Calu3 (cell line): ENCODE measurements at regions of chr5 and their contacts with region 1.

Region 1: GRCh38 chr5:103232393-103232999 is 26.1 kb upstream of the MACIR start:
- DNase-seq: peak; percentile 30
- H3K4me3 Mint-ChIP-seq: no peak overlapping the region
- H3K27ac Mint-ChIP-seq: no peak overlapping the region
- H3K4me1 Mint-ChIP-seq: no peaks in the 10 kb centered on the region
- H3K27me3 Mint-ChIP-seq: no peaks in the 10 kb centered on the region
- CTCF ChIP-seq: peak; percentile 71

Region 2: DNA sequence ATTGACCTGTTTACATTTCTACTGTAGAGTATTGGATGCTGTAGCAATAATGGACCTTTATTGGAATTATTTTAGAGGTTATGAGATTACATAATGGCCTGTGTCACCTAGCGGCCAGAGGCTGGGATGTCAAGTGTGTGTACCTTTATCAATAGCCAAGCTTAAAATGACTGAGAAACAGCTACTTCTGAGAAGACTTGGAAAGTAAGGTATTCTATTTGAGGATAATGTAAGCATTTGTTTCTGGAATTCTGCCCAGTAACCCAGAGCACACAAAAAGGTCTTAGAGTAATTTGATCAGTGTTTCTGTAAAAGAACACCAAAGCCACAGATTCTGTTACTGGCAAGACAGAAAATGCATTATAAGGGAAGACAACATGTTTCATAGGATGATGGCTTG is 142.9 kb after region 1 on chr5:
- CTCF ChIA-PET with region 1: no interaction called
- intact Hi-C with region 1: loop called (anchors 5 kb)
- DNase-seq: peak; percentile 26
- H3K4me3 Mint-ChIP-seq: no peak overlapping the region
- H3K27ac Mint-ChIP-seq: no peak overlapping the region
- H3K4me1 Mint-ChIP-seq: peaks cover 14% of the 10 kb centered on the region
- H3K27me3 Mint-ChIP-seq: peaks cover 10% of the 10 kb centered on the region
- CTCF ChIP-seq: peak; percentile 34

Region 3: GRCh38 chr5:103393101-103393754 is 160.7 kb after region 1 on chr5:
- CTCF ChIA-PET with region 1: no interaction called
- intact Hi-C with region 1: no loop called
- DNase-seq: no peak
- H3K4me3 Mint-ChIP-seq: no peak overlapping the region
- H3K27ac Mint-ChIP-seq: no peak overlapping the region
- H3K4me1 Mint-ChIP-seq: no peaks in the 10 kb centered on the region
- H3K27me3 Mint-ChIP-seq: no peaks in the 10 kb centered on the region
- CTCF ChIP-seq: no peak

Region 4: DNA sequence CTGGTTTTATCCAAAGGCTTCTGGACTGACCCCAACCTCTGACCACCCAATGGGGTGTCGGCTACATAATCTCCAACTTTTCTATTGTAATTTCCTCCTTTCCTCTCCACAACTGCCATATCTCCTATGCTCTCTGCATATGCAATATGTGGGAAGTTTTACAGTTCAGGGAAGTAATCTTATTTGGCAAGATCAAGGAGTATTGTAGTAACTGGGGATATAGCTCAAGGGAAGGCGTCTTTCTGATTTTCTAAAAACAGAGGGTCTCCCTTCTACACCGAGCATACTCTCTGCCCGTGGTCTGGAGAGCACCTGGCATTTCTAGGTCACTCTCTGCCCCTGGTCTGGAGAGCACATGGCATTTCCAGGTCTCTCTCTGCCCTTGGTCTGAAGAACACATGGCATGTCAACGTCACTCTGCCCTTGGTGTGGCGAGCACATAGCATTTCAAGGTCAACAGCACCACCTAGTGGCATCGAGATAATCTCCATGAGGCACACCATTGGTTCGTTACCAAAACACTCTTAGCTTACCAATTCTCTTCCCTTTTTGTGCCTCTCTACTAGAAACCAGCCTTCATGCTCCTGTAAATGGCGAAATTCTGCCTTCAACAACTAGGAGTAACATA is 946.4 kb after region 1 on chr5:
- CTCF ChIA-PET with region 1: no interaction called
- intact Hi-C with region 1: loop called (anchors 10 kb)
- DNase-seq: peak; percentile 70
- H3K4me3 Mint-ChIP-seq: no peak overlapping the region
- H3K27ac Mint-ChIP-seq: no peak overlapping the region
- H3K4me1 Mint-ChIP-seq: no peaks in the 10 kb centered on the region
- H3K27me3 Mint-ChIP-seq: no peaks in the 10 kb centered on the region
- CTCF ChIP-seq: peak; percentile 81